Panc1 (cell line): ENCODE measurements at regions of chr2 and their contacts with region 1.

Region 1: GRCh38 chr2:11583840-11584524 is 50.1 kb downstream of the GREB1 start:
- DNase-seq: peak; percentile 41
- ATAC-seq: peak; percentile 78
- H3K4me3 ChIP-seq: no peak overlapping the region
- H3K27ac ChIP-seq: no peak overlapping the region
- H3K4me1 ChIP-seq: no peaks in the 10 kb centered on the region
- H3K27me3 ChIP-seq: peaks cover 2% of the 10 kb centered on the region; the same call in 1 of the 2 replicates
- CTCF ChIP-seq: peak; percentile 94

Region 2: DNA sequence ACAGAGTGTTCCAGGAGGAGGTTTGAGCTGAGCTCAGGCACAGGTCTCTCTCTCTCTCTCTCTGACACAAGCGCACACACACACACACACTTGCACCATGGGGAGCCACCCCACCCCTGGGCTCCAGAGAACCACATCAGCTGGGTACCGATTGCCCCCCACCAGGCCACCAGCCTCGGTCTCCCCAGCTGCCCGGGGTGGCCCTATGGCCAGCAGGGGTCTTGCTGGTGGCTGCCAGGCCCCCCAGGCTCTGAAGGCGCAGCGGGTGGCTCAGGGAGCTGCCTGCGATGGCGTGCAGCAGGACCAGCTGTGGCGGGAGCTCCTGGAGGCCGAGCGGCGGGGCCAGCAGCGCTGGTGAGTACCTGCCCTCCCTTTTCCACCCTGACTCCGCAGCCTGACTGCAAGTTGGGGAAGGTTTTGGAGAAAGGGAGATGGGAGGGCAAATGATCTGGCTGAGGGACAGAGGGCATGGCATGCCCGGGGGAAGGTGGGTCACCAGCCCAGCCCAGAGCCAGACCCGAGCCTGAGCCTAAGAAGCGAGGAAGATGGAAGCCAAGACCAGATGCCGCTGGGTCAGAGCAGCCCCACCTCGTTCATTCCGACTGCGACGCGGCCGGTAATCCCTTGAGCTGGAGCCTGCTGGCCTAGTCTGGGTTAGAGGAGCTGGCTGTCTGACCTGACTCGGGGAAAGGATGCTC is 450.6 kb before region 1 on chr2:
- CTCF ChIA-PET with region 1: interaction called, 16 read pairs
- POLR2A ChIA-PET with region 1: no interaction called
- in situ Hi-C with region 1: no loop called
- intact Hi-C with region 1: loop called (anchors 1 kb)
- DNase-seq: no peak
- ATAC-seq: no peak
- H3K4me3 ChIP-seq: peak overlapping the region; percentile 31 to 38
- H3K27ac ChIP-seq: peak overlapping the region; percentile 55
- H3K4me1 ChIP-seq: peaks cover 10% of the 10 kb centered on the region
- H3K27me3 ChIP-seq: no peaks in the 10 kb centered on the region; the same call in 1 of the 2 replicates
- CTCF ChIP-seq: no peak

Region 3: GRCh38 chr2:11610624-11611242 is 26.8 kb after region 1 on chr2:
- CTCF ChIA-PET with region 1: no interaction called
- POLR2A ChIA-PET with region 1: no interaction called
- in situ Hi-C with region 1: no loop called
- intact Hi-C with region 1: no loop called
- DNase-seq: no peak
- ATAC-seq: no peak
- H3K4me3 ChIP-seq: no peak overlapping the region
- H3K27ac ChIP-seq: no peak overlapping the region
- H3K4me1 ChIP-seq: no peaks in the 10 kb centered on the region
- H3K27me3 ChIP-seq: peaks cover 7% of the 10 kb centered on the region; the same call in 1 of the 2 replicates
- CTCF ChIP-seq: no peak

Region 4: GRCh38 chr2:12044857-12045256 is 460.9 kb after region 1 on chr2:
- CTCF ChIA-PET with region 1: no interaction called
- POLR2A ChIA-PET with region 1: no interaction called
- in situ Hi-C with region 1: no loop called
- intact Hi-C with region 1: no loop called
- DNase-seq: no peak
- ATAC-seq: no peak
- H3K4me3 ChIP-seq: no peak overlapping the region
- H3K27ac ChIP-seq: no peak overlapping the region
- H3K4me1 ChIP-seq: no peaks in the 10 kb centered on the region
- H3K27me3 ChIP-seq: no peaks in the 10 kb centered on the region
- CTCF ChIP-seq: no peak